Pancreas (tissue), 10 donors: ENCODE measurements at regions of chr3 and their contacts with region 1.

Region 1: DNA sequence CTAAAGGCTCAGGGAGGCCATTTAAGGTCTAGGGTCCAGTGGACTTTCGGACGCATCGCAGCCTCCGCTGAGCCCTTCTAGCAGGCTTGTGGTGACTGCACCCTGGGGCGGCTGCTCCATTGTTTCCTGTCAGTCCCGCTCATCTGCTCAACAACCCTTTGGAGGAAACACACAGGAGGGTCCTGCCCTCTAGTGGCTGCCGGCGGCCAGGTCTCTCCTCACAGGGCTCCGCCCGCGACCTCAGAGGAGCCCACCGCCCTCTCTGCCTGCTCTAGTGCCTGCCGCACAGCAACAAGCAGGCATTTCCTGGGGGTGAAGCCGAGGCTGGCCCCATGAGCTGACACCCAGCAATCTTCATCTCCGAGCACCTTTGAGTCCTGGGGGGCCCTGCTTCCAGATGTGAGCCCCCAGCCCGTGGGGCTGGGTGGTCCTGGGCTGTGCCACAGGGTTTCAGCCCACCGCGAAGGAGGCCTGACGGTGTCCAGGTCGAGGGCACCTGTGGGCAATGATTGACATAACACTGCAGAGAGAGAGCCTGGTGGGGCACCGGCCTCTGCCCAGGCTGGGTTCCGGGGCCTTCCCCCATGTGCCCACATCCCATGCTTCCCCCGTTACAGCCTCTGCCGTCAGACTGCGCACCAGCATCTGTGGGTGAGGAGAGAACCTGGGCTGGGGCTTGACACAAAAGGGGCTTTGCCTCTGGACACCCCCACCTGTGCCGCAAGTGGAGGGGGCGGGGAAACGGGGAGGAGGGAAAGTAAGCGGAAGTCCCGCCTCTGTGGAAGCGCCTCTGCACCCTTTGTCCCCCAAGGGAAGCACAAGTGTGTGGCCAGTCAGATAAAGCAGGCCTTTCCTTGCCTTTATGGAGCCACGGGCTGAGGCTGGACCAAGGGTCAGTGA is 27.0 kb upstream of the SFMBT1 start:
- DNase-seq: peak; percentile 72 to 92 (median 84)
- ATAC-seq: peak; percentile 93 to 97 (median 95)
- H3K4me3 ChIP-seq: peak overlapping the region; percentile 43 to 86 (median 71)
- H3K27ac ChIP-seq: peak overlapping the region; percentile 37 to 71 (median 67)
- H3K4me1 ChIP-seq: peaks cover 0 to 4% (median 4%) of the 10 kb centered on the region in 3 donors
- H3K27me3 ChIP-seq: no peaks in the 10 kb centered on the region
- CTCF ChIP-seq: peak; percentile 90 to 96 (median 93)

Region 2: DNA sequence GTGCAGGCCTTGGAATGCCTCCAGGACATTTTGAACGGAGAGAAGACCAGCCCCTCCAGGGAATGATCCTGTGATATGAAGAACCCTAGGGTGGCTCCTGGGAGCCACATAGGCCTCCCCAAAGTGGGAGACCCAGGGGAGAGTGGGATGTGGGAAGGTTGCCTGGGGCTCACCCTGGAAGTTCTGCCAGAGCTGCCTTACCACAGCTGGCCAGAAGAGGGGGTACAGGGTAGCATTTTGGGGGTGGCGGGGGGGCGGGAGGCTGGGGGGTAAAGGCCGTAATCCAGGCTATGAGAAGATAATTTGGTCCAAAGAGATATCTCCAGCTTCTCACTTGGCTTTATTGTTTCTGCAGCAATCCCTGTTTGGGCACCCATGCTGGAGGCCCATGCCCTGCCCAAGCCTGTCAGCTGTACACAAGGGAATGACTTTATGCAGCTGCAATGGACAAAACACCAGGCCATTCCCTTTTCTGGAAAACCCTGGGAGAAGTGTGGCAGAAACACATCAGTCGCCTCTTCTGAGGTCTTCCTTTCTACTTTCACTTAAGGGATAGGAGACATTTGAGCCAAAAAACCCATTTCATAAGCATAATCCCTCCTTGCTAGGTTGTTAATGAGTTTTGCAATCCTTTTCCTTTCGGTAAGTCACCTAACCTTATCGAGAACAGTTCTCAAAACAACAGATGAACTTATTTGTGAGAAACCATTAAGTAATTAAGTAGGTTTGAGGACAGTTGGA is 227.0 kb before region 1 on chr3:
- intact Hi-C with region 1: loop called in 1 of 3 experiments (anchors 5 kb)
- DNase-seq: no peak
- ATAC-seq: peak; percentile 39 to 61 (median 52)
- H3K4me3 ChIP-seq: no peak overlapping the region
- H3K27ac ChIP-seq: peak overlapping the region in 3 of 4 donors; percentile 10 to 60 (median 41)
- H3K4me1 ChIP-seq: peaks cover 0 to 8% (median 4%) of the 10 kb centered on the region in 3 donors
- H3K27me3 ChIP-seq: no peaks in the 10 kb centered on the region
- CTCF ChIP-seq: peak in 2 of 4 donors; percentile 31 to 34

Region 3: GRCh38 chr3:53320697-53321096 is 247.8 kb after region 1 on chr3:
- intact Hi-C with region 1: no loop called
- DNase-seq: no peak
- ATAC-seq: no peak
- H3K4me3 ChIP-seq: no peak overlapping the region
- H3K27ac ChIP-seq: no peak overlapping the region
- H3K4me1 ChIP-seq: peaks cover 5 to 6% (median 6%) of the 10 kb centered on the region in 3 donors
- H3K27me3 ChIP-seq: no peaks in the 10 kb centered on the region
- CTCF ChIP-seq: no peak

Region 4: DNA sequence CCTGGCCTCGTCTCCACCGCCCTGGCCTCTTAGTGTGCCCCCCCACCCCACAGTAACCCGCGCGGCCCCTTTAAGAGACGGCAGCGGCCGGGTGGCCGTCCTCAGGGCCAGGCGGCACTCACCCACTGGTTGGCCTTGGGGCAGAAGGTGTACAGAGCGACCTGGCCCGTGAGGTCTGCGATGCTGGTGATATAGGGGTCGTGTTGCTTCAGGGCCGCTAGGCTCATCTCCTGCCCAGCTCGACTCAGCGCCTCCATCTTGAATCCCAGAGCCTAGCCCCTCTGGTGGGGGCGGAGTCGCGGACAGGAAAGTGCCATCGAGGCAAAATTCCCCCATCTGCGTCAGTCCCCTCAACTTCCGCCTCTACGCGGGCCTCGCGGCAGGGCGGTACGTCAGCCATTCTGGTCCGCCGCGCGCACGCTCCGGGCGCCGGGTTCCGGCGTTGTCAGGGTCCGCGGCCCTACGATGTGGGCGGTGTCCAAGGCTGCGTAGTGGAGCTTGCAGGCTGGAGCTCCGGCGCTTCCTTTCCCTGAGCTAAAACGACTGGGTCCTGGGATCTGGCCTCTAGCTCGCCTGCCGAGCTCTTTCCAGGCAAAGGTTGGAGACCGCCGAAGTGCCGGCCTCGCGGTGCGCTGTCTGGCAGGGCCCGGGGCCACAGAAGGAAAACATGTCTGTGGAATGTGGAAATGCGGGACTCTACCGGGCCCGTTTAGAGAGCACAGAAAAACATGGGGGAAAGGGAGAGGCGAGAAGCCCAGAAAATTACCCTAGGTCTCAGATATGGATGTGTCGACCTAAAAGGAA is 274.6 kb after region 1 on chr3 and contains the start of gene DCP1A:
- intact Hi-C with region 1: no loop called
- DNase-seq: peak; percentile 95 to 98 (median 96)
- ATAC-seq: peak; percentile 95 to 98 (median 96)
- H3K4me3 ChIP-seq: peak within 1 kb of the TSS; percentile 54 to 88 (median 83)
- H3K27ac ChIP-seq: peak within 1 kb of the TSS; percentile 91 to 95 (median 93)
- H3K4me1 ChIP-seq: peaks cover 13 to 23% (median 16%) of the 10 kb centered on the region in 3 donors
- H3K27me3 ChIP-seq: no peaks in the 10 kb centered on the region
- CTCF ChIP-seq: no peak
- total RNA-seq, gene DCP1A: 6.0 to 13.9 (median 8.1) TPM